Endothelial cell of umbilical vein (primary cell): ENCODE measurements at regions of chr6 and their contacts with region 1.

Region 1: DNA sequence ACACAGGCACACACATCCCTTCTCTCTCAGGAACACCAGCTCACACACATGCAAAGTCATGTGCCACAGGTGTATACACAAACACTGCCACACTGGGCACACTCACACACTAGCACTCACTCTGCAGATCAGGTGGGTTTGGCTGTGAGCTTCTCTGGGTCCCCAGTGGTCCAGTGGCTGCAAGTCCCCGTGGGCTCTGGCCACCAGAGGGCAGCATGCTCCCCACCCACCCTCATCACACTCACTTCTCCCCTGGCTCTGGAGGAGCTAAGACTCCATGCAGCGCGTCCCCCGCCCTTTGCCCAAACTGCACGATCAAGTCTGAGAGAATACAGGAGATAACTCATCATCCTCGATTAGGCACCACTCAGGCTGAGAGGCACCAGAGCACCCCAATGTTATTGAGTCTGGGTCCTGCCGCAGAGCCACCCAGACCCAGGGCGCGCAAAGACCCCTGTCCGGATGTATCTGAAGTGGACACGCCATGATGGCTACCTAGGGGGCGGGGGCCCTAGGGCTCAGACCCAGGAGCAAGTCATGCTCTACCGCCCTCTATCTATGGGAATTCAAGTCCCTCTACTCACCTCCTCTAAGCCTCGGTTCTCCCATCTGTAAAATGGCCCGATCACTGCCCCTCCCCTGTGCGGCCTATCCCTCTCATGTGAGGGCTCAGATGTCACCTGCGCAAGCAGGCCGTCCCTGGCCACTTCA is 90.5 kb downstream of the GRM4 start:
- DNase-seq: peak; percentile 61
- H3K4me3 ChIP-seq: no peak overlapping the region
- H3K27ac ChIP-seq: no peak overlapping the region
- H3K4me1 ChIP-seq: no peaks in the 10 kb centered on the region
- H3K27me3 ChIP-seq: peaks cover 0 to 1% of the 10 kb centered on the region in 2 experiments
- CTCF ChIP-seq: peak; percentile 71 to 97
- POLR2A ChIP-seq: no peak

Region 2: GRCh38 chr6:33000055-33000454 is 1055.3 kb before region 1 on chr6:
- CTCF ChIA-PET with region 1: no interaction called
- POLR2A ChIA-PET with region 1: no interaction called
- dilution Hi-C with region 1: no loop called
- intact Hi-C with region 1: no loop called
- DNase-seq: no peak
- H3K4me3 ChIP-seq: no peak overlapping the region
- H3K27ac ChIP-seq: no peak overlapping the region
- H3K4me1 ChIP-seq: no peaks in the 10 kb centered on the region
- H3K27me3 ChIP-seq: peaks cover 18 to 37% of the 10 kb centered on the region in 2 experiments
- CTCF ChIP-seq: peak in 1 of 2 donors; percentile 8
- POLR2A ChIP-seq: no peak

Region 3: DNA sequence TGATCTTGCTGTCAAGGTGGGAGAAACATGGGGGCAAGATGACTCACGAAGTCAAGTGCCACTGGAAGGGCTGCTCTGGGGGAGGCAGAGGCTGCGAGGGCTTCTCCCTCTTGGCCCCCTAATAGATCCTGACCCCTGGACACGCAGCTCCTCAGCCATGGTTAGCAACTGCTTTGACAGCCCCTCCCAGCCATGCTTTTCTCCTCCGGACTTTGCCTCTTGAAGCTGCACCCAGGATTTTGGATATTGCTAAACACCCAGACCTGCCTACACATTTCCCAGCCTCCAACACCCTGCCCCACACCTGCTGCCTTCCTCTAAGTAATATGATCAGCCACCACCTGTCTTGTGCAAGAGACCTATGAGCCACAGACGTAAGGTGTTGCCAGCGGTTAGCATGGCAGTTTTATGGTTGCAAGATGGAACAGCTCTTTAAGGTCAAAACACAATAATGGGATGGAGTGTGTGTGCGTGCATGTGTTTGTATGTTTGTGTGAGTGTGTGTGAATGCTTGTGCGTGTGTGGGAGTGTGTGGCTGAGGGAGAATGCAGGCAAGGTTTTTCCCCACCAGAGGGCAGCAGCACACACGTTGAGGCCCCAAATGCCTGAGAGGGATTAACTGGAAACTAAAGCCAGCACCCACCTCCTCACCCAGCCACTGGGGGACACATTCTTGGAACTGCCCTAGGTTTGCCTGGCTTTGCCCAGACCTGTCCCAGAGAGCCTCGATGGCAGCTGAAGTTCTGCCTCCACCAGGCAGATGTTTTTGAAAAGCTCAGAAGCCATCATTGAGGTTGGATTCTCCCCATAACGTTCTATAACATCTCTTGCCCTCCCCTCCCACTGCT is 311.2 kb before region 1 on chr6:
- CTCF ChIA-PET with region 1: interaction called, 11 read pairs
- POLR2A ChIA-PET with region 1: no interaction called
- dilution Hi-C with region 1: no loop called
- intact Hi-C with region 1: no loop called
- DNase-seq: peak; percentile 72
- H3K4me3 ChIP-seq: no peak overlapping the region
- H3K27ac ChIP-seq: no peak overlapping the region
- H3K4me1 ChIP-seq: no peaks in the 10 kb centered on the region
- H3K27me3 ChIP-seq: peaks cover 4 to 9% of the 10 kb centered on the region in 2 experiments
- CTCF ChIP-seq: peak; percentile 90 to 93
- POLR2A ChIP-seq: no peak

Region 4: DNA sequence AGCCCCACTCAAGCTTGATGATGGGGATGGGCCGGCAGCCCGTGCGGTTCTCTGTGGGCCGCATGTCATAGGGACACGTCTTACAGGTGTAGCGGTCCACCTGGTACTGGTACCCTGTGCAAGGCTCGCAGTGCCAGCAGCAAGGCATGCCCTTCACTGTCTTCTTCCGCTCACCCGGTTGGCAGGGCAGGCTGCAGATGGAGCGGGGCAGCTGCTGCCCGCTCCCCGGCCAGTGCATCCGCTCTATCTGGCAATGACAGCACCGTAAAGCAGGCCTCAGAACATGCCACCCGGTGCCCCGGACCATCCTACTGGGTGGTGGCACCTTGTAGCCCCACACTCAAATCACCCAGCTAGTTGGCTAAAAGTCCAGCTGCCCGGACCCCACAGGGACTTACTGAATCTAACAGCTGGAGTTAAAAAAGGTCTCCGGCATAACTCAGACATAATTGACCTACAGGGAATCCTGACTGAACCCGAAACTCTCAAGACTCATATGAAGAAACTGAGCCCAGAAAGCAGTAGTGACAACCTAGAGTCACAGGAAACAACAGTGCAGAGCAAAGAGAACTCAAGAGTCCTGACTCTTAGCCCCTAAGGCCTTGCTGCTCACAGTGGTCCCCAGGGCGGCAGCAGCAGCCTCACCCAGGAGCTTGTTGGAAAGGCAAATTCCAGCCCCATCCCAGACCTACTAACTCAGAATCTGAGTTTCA is 18.9 kb before region 1 on chr6:
- CTCF ChIA-PET with region 1: interaction called, 18 read pairs
- POLR2A ChIA-PET with region 1: no interaction called
- dilution Hi-C with region 1: no loop called
- intact Hi-C with region 1: no loop called
- DNase-seq: no peak
- H3K4me3 ChIP-seq: no peak overlapping the region
- H3K27ac ChIP-seq: no peak overlapping the region
- H3K4me1 ChIP-seq: no peaks in the 10 kb centered on the region
- H3K27me3 ChIP-seq: no peaks in the 10 kb centered on the region
- CTCF ChIP-seq: no peak
- POLR2A ChIP-seq: no peak

Region 5: GRCh38 chr6:34090529-34090928 is 35.2 kb after region 1 on chr6:
- CTCF ChIA-PET with region 1: interaction called, 14 read pairs
- POLR2A ChIA-PET with region 1: no interaction called
- dilution Hi-C with region 1: no loop called
- intact Hi-C with region 1: no loop called
- DNase-seq: no peak
- H3K4me3 ChIP-seq: no peak overlapping the region
- H3K27ac ChIP-seq: no peak overlapping the region
- H3K4me1 ChIP-seq: no peaks in the 10 kb centered on the region
- H3K27me3 ChIP-seq: peaks cover 0 to 2% of the 10 kb centered on the region in 2 experiments
- CTCF ChIP-seq: no peak
- POLR2A ChIP-seq: no peak

Region 6: DNA sequence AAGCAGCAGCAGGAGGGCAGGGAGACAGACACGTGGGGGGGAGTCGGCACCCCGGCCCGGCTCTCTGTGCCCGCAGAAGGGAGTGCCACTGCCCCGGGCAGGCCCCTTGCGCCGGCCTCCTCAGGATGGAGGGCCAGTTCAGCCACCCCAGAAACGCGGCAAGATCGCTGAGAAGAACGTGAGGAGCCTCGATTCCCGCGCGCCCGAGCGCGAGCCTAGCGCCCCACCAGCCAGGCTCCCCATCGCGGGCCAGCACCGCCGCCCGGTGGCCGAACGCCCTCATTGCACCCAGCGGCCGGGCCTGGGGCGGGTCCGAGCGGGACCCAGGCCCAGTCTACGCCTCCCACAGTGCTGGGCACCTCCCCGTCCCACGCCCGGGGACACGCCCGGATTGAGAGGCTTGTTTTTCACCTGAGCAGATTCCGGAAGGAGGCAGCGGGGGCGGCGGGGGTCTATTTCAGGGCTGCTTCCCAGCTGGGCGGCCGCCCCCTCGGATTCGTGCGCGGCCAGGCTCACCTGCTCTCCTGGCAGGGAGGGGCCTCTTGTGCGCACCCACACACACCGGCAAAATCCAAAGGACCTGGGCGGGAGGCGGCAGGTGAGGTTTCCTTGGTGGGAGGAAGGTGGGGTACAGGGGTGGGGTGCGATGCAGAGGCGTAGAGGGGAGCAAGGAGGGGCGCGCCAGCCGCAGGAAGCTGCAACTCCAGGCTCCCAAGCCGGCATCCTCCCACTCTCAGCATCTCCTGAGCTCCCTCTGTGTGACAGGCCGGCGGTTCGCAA is 99.5 kb after region 1 on chr6:
- CTCF ChIA-PET with region 1: interaction called, 245 read pairs
- POLR2A ChIA-PET with region 1: no interaction called
- dilution Hi-C with region 1: no loop called
- intact Hi-C with region 1: loop called (anchors 1 kb)
- DNase-seq: peak; percentile 17
- H3K4me3 ChIP-seq: no peak overlapping the region
- H3K27ac ChIP-seq: no peak overlapping the region
- H3K4me1 ChIP-seq: no peaks in the 10 kb centered on the region
- H3K27me3 ChIP-seq: peaks cover 13 to 29% of the 10 kb centered on the region in 2 experiments
- CTCF ChIP-seq: peak; percentile 95
- POLR2A ChIP-seq: no peak

Region 7: DNA sequence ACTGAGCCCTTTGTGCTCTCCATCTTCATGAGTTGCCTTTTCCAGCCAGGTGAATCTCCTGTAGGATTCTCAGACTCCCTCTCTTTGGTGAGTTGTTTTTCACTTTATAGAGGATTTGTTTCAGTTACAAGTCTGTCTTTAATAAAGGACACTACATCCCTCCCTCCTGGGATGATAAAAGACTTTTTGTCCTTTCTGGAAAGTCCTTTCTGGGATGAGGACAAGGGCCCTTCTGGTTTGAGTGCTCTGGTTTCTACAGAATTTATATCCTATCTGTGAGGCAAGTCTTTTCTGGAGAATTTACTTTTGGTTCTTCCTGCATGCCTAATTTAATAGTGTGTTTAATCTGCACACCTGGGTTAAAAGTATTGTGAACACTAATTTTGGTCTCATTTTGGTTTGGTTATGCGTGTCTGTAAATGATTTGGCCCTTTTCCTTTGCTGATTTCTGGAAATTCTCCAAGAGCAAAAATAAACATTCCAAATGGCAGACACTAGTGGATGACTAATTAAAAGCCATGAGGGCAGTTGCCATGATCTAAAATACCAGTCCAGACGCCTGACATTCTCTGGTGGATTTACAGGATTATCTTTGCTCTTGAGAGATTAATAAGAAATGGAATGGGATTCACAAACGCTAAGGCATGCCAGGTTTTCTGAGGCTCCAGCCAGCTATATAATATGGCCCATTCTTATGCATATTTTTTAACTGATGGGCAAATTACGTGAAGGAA is 1040.9 kb after region 1 on chr6:
- CTCF ChIA-PET with region 1: no interaction called
- POLR2A ChIA-PET with region 1: no interaction called
- dilution Hi-C with region 1: no loop called
- intact Hi-C with region 1: no loop called
- DNase-seq: peak; percentile 84
- H3K4me3 ChIP-seq: no peak overlapping the region
- H3K27ac ChIP-seq: peak overlapping the region; percentile 42
- H3K4me1 ChIP-seq: peaks cover 12% of the 10 kb centered on the region
- H3K27me3 ChIP-seq: no peaks in the 10 kb centered on the region
- CTCF ChIP-seq: no peak
- POLR2A ChIP-seq: no peak